ENCODE measurements at regions of chr1 and their contacts with region 1.

Region 1: GRCh38 chr1:229514578-229515275 is 6.6 kb upstream of the NUP133 start:
- DNase-seq: peak; percentile 66
- H3K4me3 ChIP-seq: peak overlapping the region in 1 of 2 experiments; percentile 21; a peak in 1 of 4 replicates
- H3K27ac ChIP-seq: no peak overlapping the region
- H3K4me1 ChIP-seq: no peaks in the 10 kb centered on the region; a peak in 1 of 4 replicates
- H3K27me3 ChIP-seq: no peaks in the 10 kb centered on the region
- CTCF ChIP-seq: peak; percentile 87
- EP300 ChIP-seq: no peak
- RAD21 ChIP-seq: peak; percentile 76

Region 2: GRCh38 chr1:229234870-229235472 is 279.8 kb before region 1 on chr1:
- CTCF ChIA-PET with region 1: no interaction called
- POLR2A ChIA-PET with region 1: no interaction called
- DNase-seq: no peak
- H3K4me3 ChIP-seq: no peak overlapping the region
- H3K27ac ChIP-seq: no peak overlapping the region
- H3K4me1 ChIP-seq: peaks cover 0 to 6% of the 10 kb centered on the region in 2 experiments; a peak in 2 of 4 replicates
- H3K27me3 ChIP-seq: no peaks in the 10 kb centered on the region; the same call in 1 of the 2 replicates
- CTCF ChIP-seq: no peak
- EP300 ChIP-seq: no peak
- RAD21 ChIP-seq: no peak

Region 3: DNA sequence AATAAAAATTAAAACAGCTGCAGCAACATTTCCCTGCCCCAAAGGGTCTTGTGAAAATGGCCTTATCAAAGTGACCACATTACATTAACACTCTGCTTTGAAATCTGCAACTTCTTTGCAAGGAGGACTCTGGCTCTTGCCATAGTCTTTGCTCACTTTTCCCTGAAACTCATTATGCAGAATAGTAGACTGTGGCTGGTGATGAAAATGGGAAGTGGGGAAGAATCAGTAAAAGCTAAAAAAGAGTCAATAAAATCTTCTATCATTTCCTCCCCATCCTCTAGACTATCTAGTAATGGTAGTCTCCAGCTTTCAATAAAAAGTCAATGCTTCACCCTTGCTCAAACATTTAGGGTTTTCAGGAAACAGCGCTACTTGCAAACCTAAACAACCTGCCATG is 12.0 kb after region 1 on chr1:
- CTCF ChIA-PET with region 1: interaction called, 10 read pairs
- POLR2A ChIA-PET with region 1: interaction called, 3 read pairs
- DNase-seq: no peak
- H3K4me3 ChIP-seq: no peak overlapping the region
- H3K27ac ChIP-seq: no peak overlapping the region
- H3K4me1 ChIP-seq: no peaks in the 10 kb centered on the region
- H3K27me3 ChIP-seq: no peaks in the 10 kb centered on the region
- CTCF ChIP-seq: no peak
- EP300 ChIP-seq: no peak
- RAD21 ChIP-seq: no peak